Activated CD4-positive, alpha-beta memory T cell treated with anti-CD3 and anti-CD28 coated beads for 36 hours (primary cell): ENCODE measurements at regions of chr18 and their contacts with region 1.

Region 1: DNA sequence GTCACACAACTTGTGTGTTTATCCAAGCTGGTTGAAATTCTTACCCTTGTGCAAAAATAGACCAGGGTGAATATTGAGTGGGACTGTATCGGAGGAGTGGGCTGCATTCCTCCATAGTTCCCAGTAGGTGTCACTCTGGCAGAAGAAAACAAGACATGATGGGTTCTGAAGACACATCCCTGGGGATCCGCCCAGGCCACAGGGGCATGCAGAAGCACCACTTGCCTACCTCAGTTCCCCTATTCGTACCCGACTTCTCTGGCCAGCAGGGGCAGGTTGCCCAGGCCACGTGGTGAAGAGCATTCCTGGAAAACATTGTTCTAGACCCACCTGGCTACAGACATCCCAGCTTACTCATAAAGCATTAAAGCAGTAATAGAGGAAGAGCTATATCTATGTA is 168.2 kb downstream of the FAM210A start:
- DNase-seq: peak; percentile 43
- H3K4me3 Mint-ChIP-seq: no peak overlapping the region
- H3K27ac Mint-ChIP-seq: no peak overlapping the region
- H3K4me1 Mint-ChIP-seq: peaks cover 38% of the 10 kb centered on the region
- H3K27me3 Mint-ChIP-seq: no peaks in the 10 kb centered on the region

Region 2: DNA sequence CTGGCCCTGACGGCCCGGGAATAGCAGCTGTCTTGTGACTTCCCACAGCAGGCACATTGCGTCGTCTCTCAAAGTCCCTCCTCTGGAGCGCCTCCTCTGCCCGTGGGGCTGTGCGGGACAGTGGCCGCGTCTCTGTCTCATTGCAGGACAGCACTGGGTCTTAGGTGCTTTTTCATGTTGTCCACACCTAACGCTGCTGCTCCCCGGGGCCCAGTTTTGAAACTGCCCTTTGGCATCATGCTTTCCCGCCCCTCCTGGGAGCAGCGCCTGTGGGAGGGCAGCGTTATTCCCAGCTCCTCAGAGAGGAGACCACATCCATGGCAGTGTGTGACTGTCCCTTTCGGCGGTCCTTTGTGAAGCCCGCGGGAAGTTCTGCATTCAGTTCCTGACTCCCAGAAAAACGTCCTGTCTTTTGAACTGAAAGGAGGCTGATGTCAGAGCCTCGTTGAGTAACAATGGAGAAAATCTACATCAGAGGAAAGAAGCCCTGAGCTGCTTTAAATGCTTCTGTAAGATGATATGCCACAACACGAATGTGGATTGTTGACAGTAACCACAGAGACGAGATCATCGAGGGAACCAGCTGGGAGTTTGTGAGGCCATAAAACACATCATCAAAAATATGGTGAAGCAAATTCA is 57.8 kb before region 1 on chr18:
- CTCF ChIA-PET with region 1: no interaction called
- POLR2A ChIA-PET with region 1: no interaction called
- intact Hi-C with region 1: loop called (anchors 5 kb)
- DNase-seq: peak; percentile 27
- H3K4me3 Mint-ChIP-seq: no peak overlapping the region
- H3K27ac Mint-ChIP-seq: no peak overlapping the region
- H3K4me1 Mint-ChIP-seq: peaks cover 36% of the 10 kb centered on the region
- H3K27me3 Mint-ChIP-seq: no peaks in the 10 kb centered on the region

Region 3: DNA sequence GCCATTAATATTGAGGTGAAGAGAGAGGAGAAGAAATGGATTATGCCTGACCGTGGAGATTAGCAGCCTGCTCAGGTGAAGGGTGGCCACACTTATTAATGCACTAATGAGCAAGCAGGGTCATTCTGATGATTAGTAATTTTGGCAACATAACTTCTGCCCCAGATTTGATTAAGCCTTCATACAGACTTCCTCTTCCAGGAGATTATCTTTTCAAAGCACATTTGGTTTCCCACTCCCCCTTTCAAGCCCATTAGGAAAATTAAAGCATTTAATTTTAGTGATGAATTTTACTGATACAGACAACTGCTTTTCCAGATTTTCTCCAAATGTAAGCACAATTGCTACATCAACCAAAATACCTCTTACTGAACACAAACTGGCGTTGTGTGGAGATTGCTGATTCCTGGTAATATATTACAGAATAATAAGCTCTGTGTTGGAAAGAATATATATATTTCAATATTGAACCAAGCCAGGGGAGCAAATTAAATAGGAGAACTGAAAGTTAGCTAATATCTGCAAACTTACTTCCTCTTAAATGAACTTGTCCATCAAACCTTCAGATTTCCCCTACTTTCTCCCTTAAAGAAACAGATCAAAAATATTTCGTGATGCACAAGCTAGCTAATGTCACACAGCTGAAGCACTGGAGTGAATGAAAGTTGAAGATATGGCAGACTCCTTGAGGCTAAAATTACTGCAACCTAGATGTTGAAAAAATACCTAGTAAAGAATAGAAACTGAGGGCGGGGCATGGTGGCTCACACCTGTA is 27.4 kb after region 1 on chr18:
- CTCF ChIA-PET with region 1: interaction called, 4 read pairs
- POLR2A ChIA-PET with region 1: interaction called, 3 read pairs
- intact Hi-C with region 1: loop called (anchors 1 kb)
- DNase-seq: no peak
- H3K4me3 Mint-ChIP-seq: no peak overlapping the region
- H3K27ac Mint-ChIP-seq: no peak overlapping the region
- H3K4me1 Mint-ChIP-seq: peaks cover 55% of the 10 kb centered on the region
- H3K27me3 Mint-ChIP-seq: peaks cover 1% of the 10 kb centered on the region

Region 4: GRCh38 chr18:13726232-13726971 is 168.3 kb after region 1 on chr18 and contains the starts of genes FAM210A and RNMT:
- CTCF ChIA-PET with region 1: interaction called, 3 read pairs
- POLR2A ChIA-PET with region 1: interaction called, 3 read pairs
- intact Hi-C with region 1: loop called (anchors 1 kb)
- DNase-seq: peak; percentile 96
- H3K4me3 Mint-ChIP-seq: peak within 1 kb of the TSS; percentile 83
- H3K27ac Mint-ChIP-seq: peak within 1 kb of the TSS; percentile 89
- H3K4me1 Mint-ChIP-seq: peaks cover 61% of the 10 kb centered on the region
- H3K27me3 Mint-ChIP-seq: no peaks in the 10 kb centered on the region
- total RNA-seq, gene FAM210A: 24.9 to 29.4 TPM
- total RNA-seq, gene RNMT: 41.2 to 43.6 TPM

Region 5: DNA sequence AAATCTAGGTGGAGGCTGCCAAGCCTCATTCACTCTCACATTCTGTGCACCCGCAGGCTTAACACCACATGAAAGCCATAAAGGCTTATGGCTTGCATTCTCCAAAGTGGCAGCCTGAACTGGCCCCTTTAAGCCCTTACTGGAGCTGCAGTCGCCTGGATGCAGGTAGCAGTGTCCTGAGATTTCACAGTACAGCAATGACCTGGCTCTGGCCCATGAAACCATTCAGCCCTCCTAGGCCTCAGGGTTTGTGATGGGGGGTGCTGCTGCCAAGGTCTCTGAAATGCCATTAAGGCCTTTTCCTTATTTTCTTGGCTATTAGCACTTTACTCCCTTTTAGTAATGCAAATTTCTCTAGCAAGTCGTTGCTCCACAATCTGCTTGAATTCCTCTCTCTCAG is 216.9 kb after region 1 on chr18:
- CTCF ChIA-PET with region 1: no interaction called
- POLR2A ChIA-PET with region 1: no interaction called
- intact Hi-C with region 1: no loop called
- DNase-seq: no peak
- H3K4me3 Mint-ChIP-seq: no peak overlapping the region
- H3K27ac Mint-ChIP-seq: no peak overlapping the region
- H3K4me1 Mint-ChIP-seq: no peaks in the 10 kb centered on the region
- H3K27me3 Mint-ChIP-seq: peaks cover 8% of the 10 kb centered on the region

Region 6: DNA sequence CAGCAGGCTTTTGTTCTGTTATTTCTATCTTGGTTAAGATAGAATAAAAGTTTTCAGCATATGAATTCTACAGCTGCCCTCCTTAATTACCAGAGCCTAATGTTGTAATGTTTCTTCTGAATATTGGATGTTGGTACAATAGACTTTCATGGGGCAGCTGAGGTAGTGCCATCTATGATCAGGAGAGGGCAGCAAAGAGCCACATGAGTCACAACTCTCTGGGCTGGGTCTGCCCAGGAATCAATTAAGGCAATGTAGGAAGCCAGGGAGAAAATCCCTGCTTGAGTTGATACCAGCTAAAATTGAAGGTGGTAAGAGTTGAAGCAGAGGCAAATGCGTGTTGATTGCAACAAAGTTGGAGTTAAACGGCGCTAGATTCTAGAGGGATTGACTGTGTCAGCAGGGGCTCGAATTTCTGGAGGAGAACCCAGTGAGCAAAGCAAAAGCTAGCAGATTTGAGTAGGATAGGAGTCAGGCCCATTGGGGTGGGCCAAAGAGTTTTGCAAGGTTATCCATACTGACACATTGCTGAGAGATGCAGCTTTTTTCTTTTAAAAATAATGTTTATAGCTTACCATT is 255.2 kb after region 1 on chr18:
- CTCF ChIA-PET with region 1: interaction called, 11 read pairs
- POLR2A ChIA-PET with region 1: no interaction called
- intact Hi-C with region 1: no loop called
- DNase-seq: peak; percentile 69
- H3K4me3 Mint-ChIP-seq: no peak overlapping the region
- H3K27ac Mint-ChIP-seq: no peak overlapping the region
- H3K4me1 Mint-ChIP-seq: no peaks in the 10 kb centered on the region
- H3K27me3 Mint-ChIP-seq: no peaks in the 10 kb centered on the region